Activated naive CD4-positive, alpha-beta T cell treated with anti-CD3 and anti-CD28 coated beads for 36 hours (primary cell): ENCODE measurements at regions of chr10 and their contacts with region 1.

Region 1: DNA sequence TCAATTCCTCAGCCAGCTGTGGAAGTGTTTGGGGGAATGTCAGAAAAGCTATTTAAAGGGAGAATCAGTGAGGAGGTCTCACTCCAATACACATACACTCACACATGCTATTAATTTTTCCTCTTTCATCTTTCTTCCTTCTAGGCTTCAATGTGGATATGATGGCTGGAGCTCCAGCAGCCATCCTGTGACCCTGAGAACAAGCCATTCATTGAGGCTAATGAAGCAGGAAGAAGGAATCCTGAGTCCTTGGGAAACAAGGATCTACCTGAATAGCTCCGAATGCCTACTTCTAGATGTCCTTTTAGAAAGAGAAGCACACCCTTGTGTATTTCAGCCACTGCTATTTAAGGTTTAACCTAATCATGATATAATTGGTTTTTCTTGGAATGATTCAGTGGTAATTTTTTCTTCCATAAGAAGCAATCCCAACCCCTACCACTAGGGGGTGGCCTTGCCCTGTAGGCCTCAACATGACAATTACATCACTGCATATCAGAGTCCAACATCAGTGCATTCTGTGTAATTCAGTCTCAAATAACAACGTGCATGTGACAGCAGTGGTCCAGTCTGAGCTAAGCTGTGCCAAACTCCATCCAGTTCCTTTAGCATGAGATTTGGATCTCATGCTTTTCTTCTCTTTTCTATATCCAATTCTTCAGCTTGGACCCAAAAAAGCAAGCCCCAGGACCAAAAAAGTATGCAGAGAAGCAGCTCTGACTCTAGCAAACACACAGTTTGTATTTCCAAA is 85.3 kb upstream of the ANKRD1 start:
- DNase-seq: peak; percentile 83
- H3K4me3 Mint-ChIP-seq: no peak overlapping the region
- H3K27ac Mint-ChIP-seq: no peak overlapping the region
- H3K4me1 Mint-ChIP-seq: peaks cover 31% of the 10 kb centered on the region
- H3K27me3 Mint-ChIP-seq: no peaks in the 10 kb centered on the region

Region 2: DNA sequence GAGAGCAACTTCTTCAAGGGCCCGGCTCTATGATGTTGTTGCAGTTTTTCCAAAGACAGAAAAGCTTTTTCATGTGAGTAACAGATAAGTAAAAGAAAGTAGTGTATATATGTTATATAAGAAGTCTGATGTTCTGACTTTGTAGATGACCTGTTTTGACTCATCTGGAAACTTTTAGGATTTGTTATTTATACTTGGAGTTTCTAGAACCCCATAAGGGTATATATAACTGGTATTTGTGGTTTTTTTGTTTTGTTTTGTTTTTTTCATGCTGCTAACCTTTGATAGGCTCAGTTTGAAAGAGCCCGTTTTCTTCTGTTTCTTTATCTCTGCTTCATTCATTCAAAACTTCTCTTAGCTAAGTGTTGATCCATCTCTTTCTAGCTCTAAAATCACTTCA is 127.1 kb before region 1 on chr10:
- CTCF ChIA-PET with region 1: interaction called, 12 read pairs
- intact Hi-C with region 1: no loop called
- DNase-seq: no peak
- H3K4me3 Mint-ChIP-seq: no peak overlapping the region
- H3K27ac Mint-ChIP-seq: no peak overlapping the region
- H3K4me1 Mint-ChIP-seq: peaks cover 3% of the 10 kb centered on the region
- H3K27me3 Mint-ChIP-seq: no peaks in the 10 kb centered on the region

Region 3: DNA sequence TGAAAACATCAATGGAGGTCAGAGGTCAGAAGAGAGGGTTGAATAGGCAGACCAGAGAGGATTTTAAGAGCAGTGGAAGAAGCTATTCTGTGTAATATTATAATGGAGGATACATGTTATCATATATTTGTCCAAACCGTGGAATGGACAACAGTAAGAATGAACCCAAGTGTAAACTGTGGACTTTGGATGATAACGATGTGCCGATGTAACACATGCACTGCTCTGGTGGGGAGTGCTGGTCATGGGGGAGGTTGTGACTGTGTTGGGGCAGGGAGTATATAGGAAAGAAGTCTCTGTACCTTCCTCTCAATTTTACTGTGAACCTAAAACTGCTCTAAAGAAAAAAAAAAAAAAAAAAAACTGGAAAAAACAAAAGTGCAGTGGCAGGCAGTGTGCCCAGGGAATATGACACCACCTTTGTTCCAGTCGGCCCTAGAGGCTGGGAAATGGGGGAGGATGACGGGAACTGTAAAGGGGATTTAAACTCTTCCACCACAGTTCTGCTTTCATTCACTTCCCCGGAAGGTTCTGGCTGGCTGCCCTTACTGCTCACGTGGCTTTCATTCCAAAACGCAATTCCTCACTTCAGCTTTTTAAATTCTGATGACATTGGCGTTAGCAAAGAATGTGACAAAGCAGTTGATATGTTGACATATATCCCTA is 28.5 kb after region 1 on chr10:
- CTCF ChIA-PET with region 1: interaction called, 11 read pairs
- intact Hi-C with region 1: loop called (anchors 1 kb)
- DNase-seq: no peak
- H3K4me3 Mint-ChIP-seq: no peak overlapping the region
- H3K27ac Mint-ChIP-seq: peak overlapping the region; percentile 57
- H3K4me1 Mint-ChIP-seq: peaks cover 15% of the 10 kb centered on the region
- H3K27me3 Mint-ChIP-seq: no peaks in the 10 kb centered on the region

Region 4: GRCh38 chr10:91198781-91199180 is 192.6 kb after region 1 on chr10:
- CTCF ChIA-PET with region 1: interaction called, 6 read pairs
- intact Hi-C with region 1: loop called (anchors 1 kb)
- DNase-seq: peak; percentile 37
- H3K4me3 Mint-ChIP-seq: no peak overlapping the region
- H3K27ac Mint-ChIP-seq: peak overlapping the region; percentile 13
- H3K4me1 Mint-ChIP-seq: peaks cover 77% of the 10 kb centered on the region
- H3K27me3 Mint-ChIP-seq: no peaks in the 10 kb centered on the region

Region 5: GRCh38 chr10:91298224-91298871 is 292.2 kb after region 1 on chr10:
- CTCF ChIA-PET with region 1: interaction called, 12 read pairs
- intact Hi-C with region 1: loop called (anchors 1 kb)
- DNase-seq: peak; percentile 90
- H3K4me3 Mint-ChIP-seq: peak overlapping the region; percentile 71
- H3K27ac Mint-ChIP-seq: no peak overlapping the region
- H3K4me1 Mint-ChIP-seq: peaks cover 8% of the 10 kb centered on the region
- H3K27me3 Mint-ChIP-seq: peaks cover 2% of the 10 kb centered on the region

Region 6: DNA sequence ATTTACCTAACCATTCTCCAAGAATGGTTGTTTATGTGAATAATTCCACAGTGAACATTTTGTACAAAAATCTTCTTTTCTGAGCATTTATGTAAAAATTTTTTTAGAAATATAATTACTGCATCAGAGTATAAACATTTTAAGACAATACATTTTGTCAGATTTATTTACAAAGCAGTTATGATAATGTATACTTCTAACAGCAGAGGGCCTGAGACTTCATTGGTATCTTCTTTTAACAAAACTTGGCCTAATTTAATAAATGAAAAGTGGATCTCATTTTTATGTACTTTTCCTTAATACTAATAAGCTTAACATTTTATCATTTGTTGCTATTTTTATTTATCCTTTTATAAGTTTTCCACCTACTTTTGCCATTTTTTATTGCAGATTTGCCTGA is 473.4 kb after region 1 on chr10:
- CTCF ChIA-PET with region 1: no interaction called
- intact Hi-C with region 1: no loop called
- DNase-seq: no peak
- H3K4me3 Mint-ChIP-seq: no peak overlapping the region
- H3K27ac Mint-ChIP-seq: no peak overlapping the region
- H3K4me1 Mint-ChIP-seq: no peaks in the 10 kb centered on the region
- H3K27me3 Mint-ChIP-seq: no peaks in the 10 kb centered on the region

Region 7: DNA sequence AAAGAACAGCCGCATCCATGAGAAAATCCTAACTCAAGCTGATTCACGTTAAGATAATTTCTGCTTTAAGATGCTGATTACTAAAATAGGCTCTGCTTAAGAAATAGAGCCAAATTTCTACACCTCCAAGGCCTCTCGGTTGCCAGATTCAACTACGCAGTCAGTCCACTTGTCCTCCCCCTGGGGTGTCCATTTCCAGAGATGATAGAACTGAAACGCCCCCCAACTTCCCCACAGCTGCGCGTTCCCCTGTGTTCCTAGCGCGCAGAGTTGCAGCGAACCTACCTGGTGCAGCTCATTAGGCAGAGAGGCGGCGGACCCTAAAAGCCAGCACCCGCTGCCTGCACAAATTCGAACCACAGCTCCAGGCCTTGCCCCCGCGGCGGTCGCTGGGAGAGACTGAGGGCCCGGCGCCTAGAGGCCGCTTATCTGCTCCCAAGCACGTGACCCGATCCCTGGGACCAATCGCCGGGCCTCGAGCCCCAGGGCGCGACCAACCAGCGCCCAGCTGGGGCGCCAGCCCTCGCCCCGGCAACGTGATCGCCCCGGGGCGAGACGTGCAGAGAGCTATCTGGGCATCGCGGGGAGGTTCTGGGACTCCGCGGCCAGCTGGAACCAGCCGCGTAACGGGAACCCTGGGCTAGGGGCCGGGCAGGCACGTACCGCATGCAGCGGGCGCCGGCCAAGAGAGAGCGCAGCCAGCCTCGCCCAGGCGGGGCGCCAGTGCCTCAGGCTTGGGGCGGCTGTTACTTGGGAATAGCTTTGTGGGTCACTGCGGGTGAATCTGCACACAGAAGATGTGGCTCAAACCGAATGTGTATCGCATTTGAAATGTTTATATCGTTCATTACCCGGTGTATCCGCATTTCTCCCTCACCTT is 626.7 kb after region 1 on chr10 and contains the start of gene PPP1R3C:
- CTCF ChIA-PET with region 1: no interaction called
- intact Hi-C with region 1: loop called (anchors 1 kb)
- DNase-seq: peak; percentile 63
- H3K4me3 Mint-ChIP-seq: peak within 1 kb of the TSS; percentile 71
- H3K27ac Mint-ChIP-seq: no peak within 1 kb of the TSS
- H3K4me1 Mint-ChIP-seq: peaks cover 9% of the 10 kb centered on the region
- H3K27me3 Mint-ChIP-seq: peaks cover 55% of the 10 kb centered on the region
- total RNA-seq, gene PPP1R3C: 0.07 to 0.12 TPM